A673 (cell line): ENCODE measurements at regions of chr11 and their contacts with region 1.

Region 1: DNA sequence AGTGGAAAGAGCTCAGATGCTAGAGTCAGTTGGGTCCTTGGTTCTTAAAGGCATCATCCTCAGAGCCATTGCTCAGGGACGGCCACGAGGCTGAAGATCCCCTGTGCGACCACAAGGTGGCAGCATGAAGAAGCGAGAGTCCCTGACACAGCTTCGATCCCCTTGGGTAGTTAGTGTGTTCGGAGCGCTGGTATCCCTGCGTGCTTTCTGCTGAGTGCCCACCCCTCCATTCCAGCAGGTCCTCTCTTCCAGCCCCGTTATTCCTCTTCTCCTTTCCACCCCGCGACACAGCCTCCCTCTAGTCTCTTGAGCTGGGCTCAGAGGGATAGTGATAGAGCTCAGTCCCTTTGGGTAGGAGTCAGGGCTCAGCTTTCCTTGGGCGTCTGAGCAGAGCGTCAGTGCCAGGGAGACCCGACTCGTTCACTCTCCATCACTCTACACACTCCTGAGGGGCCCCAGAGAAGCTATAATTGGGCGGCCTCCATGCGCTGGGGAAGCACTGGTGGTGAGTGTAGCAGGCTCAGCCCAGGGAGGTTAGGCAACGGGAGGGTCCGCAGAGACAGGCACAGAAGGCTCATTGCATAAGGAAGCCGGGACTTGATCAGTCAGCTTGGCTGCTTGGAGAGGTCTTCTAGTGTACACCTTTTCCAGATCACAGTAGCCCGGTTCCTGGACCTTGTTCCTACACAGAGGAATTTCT is at the start of gene OR51D1:
- DNase-seq: peak; percentile 74
- H3K4me3 ChIP-seq: no peak within 1 kb of the TSS
- H3K27ac ChIP-seq: no peak within 1 kb of the TSS
- H3K4me1 ChIP-seq: no peaks in the 10 kb centered on the region
- H3K27me3 ChIP-seq: peaks cover 9% of the 10 kb centered on the region
- CTCF ChIP-seq: peak; percentile 83
- total RNA-seq, gene OR51D1: not detected in 2 replicates

Region 2: GRCh38 chr11:4826425-4826824 is 189.3 kb after region 1 on chr11:
- CTCF ChIA-PET with region 1: interaction called, 10 read pairs
- POLR2A ChIA-PET with region 1: no interaction called
- intact Hi-C with region 1: loop called (anchors 2 kb)
- DNase-seq: no peak
- H3K4me3 ChIP-seq: no peak overlapping the region
- H3K27ac ChIP-seq: no peak overlapping the region
- H3K4me1 ChIP-seq: no peaks in the 10 kb centered on the region
- H3K27me3 ChIP-seq: peaks cover 2% of the 10 kb centered on the region
- CTCF ChIP-seq: peak; percentile 35; the same call in 1 of the 2 replicates

Region 3: DNA sequence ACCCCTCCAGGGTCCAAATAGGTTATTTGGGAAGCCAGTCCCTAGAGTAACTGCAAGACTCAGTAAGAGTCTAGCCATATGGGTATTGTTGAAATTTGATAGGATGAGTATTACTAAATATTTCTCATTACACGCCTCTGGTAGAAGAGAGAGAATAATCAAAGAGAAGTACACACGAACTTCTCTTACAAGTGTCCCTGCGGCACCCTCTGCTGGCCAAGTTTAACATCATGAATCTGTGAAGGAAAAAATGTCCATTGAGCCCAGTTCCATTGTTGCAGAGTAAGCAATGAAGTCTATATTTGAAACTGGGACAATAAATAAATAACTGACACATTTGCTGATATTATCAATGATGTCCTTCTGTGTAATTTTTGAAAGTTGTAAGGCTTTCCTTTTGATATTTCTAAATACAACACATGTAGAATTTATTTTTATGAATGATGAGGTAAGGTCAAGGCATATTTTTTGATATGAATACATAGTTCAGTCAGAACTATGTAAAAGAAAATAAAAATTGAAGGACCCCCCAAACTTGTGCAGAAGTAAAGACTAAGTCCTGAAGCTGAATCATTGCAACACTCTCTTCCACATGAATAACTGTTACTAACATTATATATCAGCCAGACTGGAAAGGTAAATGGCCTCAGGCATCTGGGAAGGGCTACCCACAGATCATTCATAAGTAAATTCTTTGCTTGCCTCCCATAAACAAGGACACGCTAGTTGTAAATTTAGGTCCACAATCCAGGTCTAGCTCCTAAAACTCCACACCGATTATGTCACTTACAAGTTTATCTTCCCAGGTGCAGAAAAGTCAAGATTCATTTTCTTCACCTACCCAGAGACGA is 367.5 kb after region 1 on chr11:
- CTCF ChIA-PET with region 1: no interaction called
- POLR2A ChIA-PET with region 1: no interaction called
- intact Hi-C with region 1: loop called (anchors 1 kb)
- DNase-seq: peak; percentile 59
- H3K4me3 ChIP-seq: no peak overlapping the region
- H3K27ac ChIP-seq: no peak overlapping the region
- H3K4me1 ChIP-seq: no peaks in the 10 kb centered on the region
- H3K27me3 ChIP-seq: no peaks in the 10 kb centered on the region
- CTCF ChIP-seq: peak; percentile 65